Activated B cell treated with CpG ODN at 0.5 μM for 24 hours (primary cell): ENCODE measurements at regions of chrX and their contacts with region 1.

Region 1: GRCh38 chrX:111869639-111870034 is 6.3 kb upstream of the TRPC5OS start:
- DNase-seq: no peak
- ATAC-seq: no peak
- H3K4me3 Mint-ChIP-seq: no peak overlapping the region
- H3K27ac Mint-ChIP-seq: no peak overlapping the region
- H3K4me1 Mint-ChIP-seq: peaks cover 3% of the 10 kb centered on the region
- H3K27me3 Mint-ChIP-seq: peaks cover 2% of the 10 kb centered on the region
- CTCF ChIP-seq: no peak

Region 2: DNA sequence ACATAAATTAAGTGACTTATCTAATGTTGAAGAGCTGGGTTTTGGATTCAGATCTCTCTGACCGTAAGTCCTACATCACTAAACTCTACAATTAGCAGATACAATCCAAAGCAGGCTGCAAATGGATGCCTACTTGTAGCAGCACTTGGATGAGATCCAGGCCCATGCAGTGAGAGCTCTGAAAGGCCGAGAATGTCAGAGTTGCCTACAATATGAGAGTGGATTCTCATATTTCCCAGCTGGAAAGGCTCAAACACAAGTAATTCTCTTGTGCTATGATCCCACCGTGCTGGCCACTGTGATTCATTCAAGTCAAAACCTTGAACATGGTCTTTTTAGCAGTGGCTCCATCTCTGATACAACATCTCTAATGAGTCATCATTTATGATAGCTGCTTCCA is 948.6 kb before region 1 on chrX:
- CTCF ChIA-PET with region 1: no interaction called
- POLR2A ChIA-PET with region 1: no interaction called
- intact Hi-C with region 1: no loop called
- DNase-seq: no peak
- ATAC-seq: no peak
- H3K4me3 Mint-ChIP-seq: no peak overlapping the region
- H3K27ac Mint-ChIP-seq: no peak overlapping the region
- H3K4me1 Mint-ChIP-seq: no peaks in the 10 kb centered on the region
- H3K27me3 Mint-ChIP-seq: no peaks in the 10 kb centered on the region
- CTCF ChIP-seq: no peak

Region 3: GRCh38 chrX:111581086-111581485 is 288.6 kb before region 1 on chrX:
- CTCF ChIA-PET with region 1: no interaction called
- POLR2A ChIA-PET with region 1: no interaction called
- intact Hi-C with region 1: no loop called
- DNase-seq: no peak
- ATAC-seq: no peak
- H3K4me3 Mint-ChIP-seq: no peak overlapping the region
- H3K27ac Mint-ChIP-seq: no peak overlapping the region
- H3K4me1 Mint-ChIP-seq: no peaks in the 10 kb centered on the region
- H3K27me3 Mint-ChIP-seq: no peaks in the 10 kb centered on the region
- CTCF ChIP-seq: no peak

Region 4: DNA sequence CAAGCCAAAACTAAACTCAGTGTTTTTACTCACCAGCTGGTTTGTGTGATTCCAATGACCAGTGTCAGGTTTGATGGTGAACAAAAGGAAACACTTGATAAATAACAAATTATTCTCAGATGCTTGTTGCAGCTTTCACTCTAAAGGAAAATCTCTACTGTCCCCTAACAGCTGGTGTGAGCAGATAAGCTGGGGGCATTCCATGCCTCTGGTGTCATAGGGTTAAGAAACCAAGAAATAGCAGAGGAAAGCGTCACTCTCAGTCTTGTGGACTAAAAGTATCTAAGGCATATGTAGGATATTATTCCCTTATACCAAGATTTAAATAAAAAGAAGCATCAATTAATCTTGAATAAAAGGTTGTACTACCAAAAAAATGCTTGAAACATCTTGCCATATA is 188.6 kb after region 1 on chrX:
- CTCF ChIA-PET with region 1: no interaction called
- POLR2A ChIA-PET with region 1: no interaction called
- intact Hi-C with region 1: no loop called
- DNase-seq: no peak
- ATAC-seq: no peak
- H3K4me3 Mint-ChIP-seq: no peak overlapping the region
- H3K27ac Mint-ChIP-seq: no peak overlapping the region
- H3K4me1 Mint-ChIP-seq: no peaks in the 10 kb centered on the region
- H3K27me3 Mint-ChIP-seq: no peaks in the 10 kb centered on the region
- CTCF ChIP-seq: no peak

Region 5: DNA sequence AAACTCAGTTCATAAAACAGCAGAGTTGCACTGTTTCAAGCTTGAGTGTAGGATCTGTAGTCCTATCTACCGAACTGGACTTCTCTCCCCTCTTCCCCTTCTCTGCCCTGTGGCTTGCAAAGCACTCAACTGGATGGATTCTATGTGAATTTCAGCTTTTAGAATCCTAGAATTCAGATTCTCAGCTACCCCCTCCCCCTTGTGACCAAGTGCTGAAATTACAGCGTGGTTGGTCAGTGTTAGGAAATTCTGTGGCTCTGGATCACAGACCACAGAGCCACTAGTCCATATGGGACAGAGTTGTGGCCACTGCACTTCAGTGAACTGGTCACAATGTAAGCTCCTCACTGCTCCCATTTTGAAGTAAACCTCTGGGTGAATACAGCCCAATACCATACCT is 277.6 kb after region 1 on chrX:
- CTCF ChIA-PET with region 1: no interaction called
- POLR2A ChIA-PET with region 1: no interaction called
- intact Hi-C with region 1: loop called (anchors 2 kb)
- DNase-seq: no peak
- ATAC-seq: no peak
- H3K4me3 Mint-ChIP-seq: no peak overlapping the region
- H3K27ac Mint-ChIP-seq: no peak overlapping the region
- H3K4me1 Mint-ChIP-seq: no peaks in the 10 kb centered on the region
- H3K27me3 Mint-ChIP-seq: no peaks in the 10 kb centered on the region
- CTCF ChIP-seq: no peak

Region 6: DNA sequence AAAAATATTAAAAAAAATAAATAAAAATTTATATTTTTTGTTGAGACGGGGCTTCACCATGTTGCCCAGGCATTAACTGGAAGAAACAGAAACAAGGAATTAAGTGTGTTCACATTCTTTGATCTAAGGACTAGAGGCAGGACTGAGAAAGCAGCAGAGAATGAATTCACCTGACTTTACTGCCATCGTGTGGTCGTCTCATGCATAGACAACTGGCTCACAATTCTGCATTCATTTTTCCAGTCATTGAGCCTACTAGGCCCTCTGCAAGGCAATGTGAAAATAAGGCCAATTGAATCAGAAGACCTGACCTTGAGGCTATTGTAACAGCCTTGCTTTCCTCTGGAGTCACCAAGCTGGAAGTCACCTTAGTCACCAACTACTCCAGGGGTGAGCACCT is 772.7 kb after region 1 on chrX:
- CTCF ChIA-PET with region 1: interaction called, 3 read pairs
- POLR2A ChIA-PET with region 1: no interaction called
- intact Hi-C with region 1: loop called (anchors 2 kb)
- DNase-seq: no peak
- ATAC-seq: peak; percentile 50
- H3K4me3 Mint-ChIP-seq: no peak overlapping the region
- H3K27ac Mint-ChIP-seq: no peak overlapping the region
- H3K4me1 Mint-ChIP-seq: no peaks in the 10 kb centered on the region
- H3K27me3 Mint-ChIP-seq: peaks cover 2% of the 10 kb centered on the region
- CTCF ChIP-seq: no peak